A549 (cell line): ENCODE measurements at regions of chr5 and their contacts with region 1.

Region 1: DNA sequence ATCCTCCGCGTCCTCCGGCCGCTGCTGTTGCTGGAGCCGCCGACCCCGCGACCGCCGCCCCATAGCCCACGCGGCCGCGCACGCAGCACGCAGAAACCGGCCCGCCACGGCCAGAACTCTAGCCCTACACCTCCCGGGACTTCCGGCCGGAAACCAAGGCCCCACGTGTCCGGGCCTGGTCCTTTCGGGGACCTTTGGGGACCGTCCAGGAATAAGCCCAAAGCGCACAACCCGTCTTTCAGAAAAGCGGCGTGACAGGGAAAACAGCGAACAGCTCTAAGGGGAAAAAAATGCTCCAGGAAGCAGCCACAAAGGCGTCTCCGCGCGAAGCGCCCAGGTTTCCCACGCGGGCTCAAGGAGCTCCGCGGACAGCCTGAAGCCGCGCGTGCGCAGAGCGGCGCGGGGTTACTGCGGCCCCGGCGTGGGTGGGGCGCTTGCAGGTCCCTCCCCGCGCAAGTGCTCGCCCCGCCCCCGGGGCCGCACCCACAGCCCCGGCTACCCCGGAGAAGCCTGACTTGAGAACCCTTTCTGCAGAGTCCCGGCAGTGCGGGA is at the starts of genes NSUN2 and SRD5A1:
- DNase-seq: peak; percentile 92 to 94
- ATAC-seq: peak; percentile 88 to 93
- H3K4me3 ChIP-seq: peak within 1 kb of the TSS; percentile 77
- H3K27ac ChIP-seq: peak within 1 kb of the TSS; percentile 92 to 98
- H3K4me1 ChIP-seq: peaks cover 19% of the 10 kb centered on the region
- CTCF ChIP-seq: no peak
- EP300 ChIP-seq: no peak
- POLR2A ChIP-seq: peak; percentile 85
- RAD21 ChIP-seq: no peak
- polyA plus RNA-seq, gene NSUN2: 91.3 and 95.7 TPM in 2 replicates
- polyA plus RNA-seq, gene SRD5A1: 25.4 and 28.1 TPM in 2 replicates

Region 2: GRCh38 chr5:6556089-6556801 is 76.7 kb before region 1 on chr5:
- CTCF ChIA-PET with region 1: no interaction called
- POLR2A ChIA-PET with region 1: no interaction called
- DNase-seq: no peak
- ATAC-seq: no peak
- H3K4me3 ChIP-seq: no peak overlapping the region
- H3K27ac ChIP-seq: no peak overlapping the region
- H3K4me1 ChIP-seq: no peaks in the 10 kb centered on the region
- CTCF ChIP-seq: no peak
- EP300 ChIP-seq: no peak
- POLR2A ChIP-seq: no peak
- RAD21 ChIP-seq: no peak

Region 3: GRCh38 chr5:6712577-6713275 is 79.7 kb after region 1 on chr5:
- CTCF ChIA-PET with region 1: no interaction called
- POLR2A ChIA-PET with region 1: interaction called, 23 read pairs
- DNase-seq: peak; percentile 75 to 98
- ATAC-seq: peak; percentile 72 to 82
- H3K4me3 ChIP-seq: peak overlapping the region; percentile 78
- H3K27ac ChIP-seq: peak overlapping the region; percentile 90 to 96
- H3K4me1 ChIP-seq: peaks cover 25% of the 10 kb centered on the region; the same call in 2 of the 3 replicates
- CTCF ChIP-seq: no peak
- EP300 ChIP-seq: no peak
- POLR2A ChIP-seq: peak; percentile 68
- RAD21 ChIP-seq: no peak; a peak in 1 of 5 replicates